Sigmoid colon (tissue), 7 donors: ENCODE measurements at regions of chr6 and their contacts with region 1.

Region 1: GRCh38 chr6:34154668-34155447 is 9.0 kb upstream of the GRM4 start:
- DNase-seq: peak; percentile 69
- H3K4me3 ChIP-seq: peak overlapping the region in 1 of 4 donors; percentile 12
- H3K27ac ChIP-seq: no peak overlapping the region
- H3K4me1 ChIP-seq: peaks cover 0 to 11% (median 7%) of the 10 kb centered on the region in 4 donors
- H3K27me3 ChIP-seq: peaks cover 14 to 59% (median 53%) of the 10 kb centered on the region in 3 donors
- CTCF ChIP-seq: peak; percentile 80 to 96 (median 89)
- EP300 ChIP-seq: no peak
- POLR2A ChIP-seq: no peak

Region 2: DNA sequence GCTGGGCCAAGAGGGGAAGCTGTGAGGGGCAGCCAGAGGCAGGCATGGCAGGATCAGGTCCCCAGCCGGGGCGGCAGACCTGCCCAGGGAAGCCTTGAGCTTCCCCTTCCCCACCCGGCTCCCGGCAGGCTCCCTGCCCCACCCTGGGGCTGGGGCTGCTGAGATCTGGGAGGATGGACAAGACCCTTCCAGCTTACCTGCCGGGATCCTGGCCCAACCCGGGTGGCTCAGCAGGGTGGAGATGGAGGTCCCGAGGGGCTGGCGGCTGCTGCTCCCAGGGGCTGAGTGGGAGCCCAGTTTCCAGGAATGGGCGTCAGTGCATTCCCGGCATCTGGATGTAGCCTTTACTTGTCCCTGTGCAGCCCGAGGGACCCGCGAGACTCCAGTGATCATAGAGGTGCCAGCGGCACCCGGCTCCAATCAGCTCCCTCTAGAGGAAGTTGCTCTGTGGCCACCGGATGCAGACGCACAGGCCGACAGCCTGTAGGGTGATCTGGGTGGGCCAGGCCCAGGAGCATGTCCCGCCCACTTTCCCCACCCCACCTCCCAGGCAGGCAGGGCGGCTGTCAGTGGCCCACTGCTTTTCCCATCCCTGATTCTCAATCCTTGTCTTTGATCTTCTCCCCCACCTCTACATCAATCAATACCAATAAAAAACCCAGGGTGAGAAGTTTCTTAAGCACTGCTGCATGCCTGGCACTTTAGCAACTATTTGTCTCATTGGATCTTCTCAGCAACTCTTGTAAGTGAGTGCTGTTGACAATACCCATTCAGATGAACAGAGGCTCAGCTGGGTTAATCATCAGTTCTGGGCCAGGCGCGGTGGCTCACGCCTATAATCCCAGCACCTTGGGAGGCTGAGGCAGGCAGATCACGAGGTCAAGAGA is 574.8 kb before region 1 on chr6 and contains the start of gene BAK1:
- intact Hi-C with region 1: loop called (anchors 10 kb)
- DNase-seq: peak; percentile 97
- H3K4me3 ChIP-seq: peak within 1 kb of the TSS; percentile 82 to 92 (median 88)
- H3K27ac ChIP-seq: peak within 1 kb of the TSS; percentile 85 to 87 (median 86)
- H3K4me1 ChIP-seq: peaks cover 0 to 24% (median 21%) of the 10 kb centered on the region in 4 donors
- H3K27me3 ChIP-seq: no peaks in the 10 kb centered on the region
- CTCF ChIP-seq: peak in 3 of 4 experiments; percentile 49 to 52 (median 50)
- EP300 ChIP-seq: no peak
- POLR2A ChIP-seq: peak; percentile 56 to 90
- total RNA-seq, gene BAK1: 8.9 to 11.1 (median 10.4) TPM

Region 3: DNA sequence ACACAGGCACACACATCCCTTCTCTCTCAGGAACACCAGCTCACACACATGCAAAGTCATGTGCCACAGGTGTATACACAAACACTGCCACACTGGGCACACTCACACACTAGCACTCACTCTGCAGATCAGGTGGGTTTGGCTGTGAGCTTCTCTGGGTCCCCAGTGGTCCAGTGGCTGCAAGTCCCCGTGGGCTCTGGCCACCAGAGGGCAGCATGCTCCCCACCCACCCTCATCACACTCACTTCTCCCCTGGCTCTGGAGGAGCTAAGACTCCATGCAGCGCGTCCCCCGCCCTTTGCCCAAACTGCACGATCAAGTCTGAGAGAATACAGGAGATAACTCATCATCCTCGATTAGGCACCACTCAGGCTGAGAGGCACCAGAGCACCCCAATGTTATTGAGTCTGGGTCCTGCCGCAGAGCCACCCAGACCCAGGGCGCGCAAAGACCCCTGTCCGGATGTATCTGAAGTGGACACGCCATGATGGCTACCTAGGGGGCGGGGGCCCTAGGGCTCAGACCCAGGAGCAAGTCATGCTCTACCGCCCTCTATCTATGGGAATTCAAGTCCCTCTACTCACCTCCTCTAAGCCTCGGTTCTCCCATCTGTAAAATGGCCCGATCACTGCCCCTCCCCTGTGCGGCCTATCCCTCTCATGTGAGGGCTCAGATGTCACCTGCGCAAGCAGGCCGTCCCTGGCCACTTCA is 99.5 kb before region 1 on chr6:
- intact Hi-C with region 1: loop called (anchors 5 kb)
- DNase-seq: peak; percentile 72
- H3K4me3 ChIP-seq: no peak overlapping the region
- H3K27ac ChIP-seq: no peak overlapping the region
- H3K4me1 ChIP-seq: peaks cover 0 to 11% (median 2%) of the 10 kb centered on the region in 4 donors
- H3K27me3 ChIP-seq: peaks cover 0 to 20% (median 0%) of the 10 kb centered on the region in 3 donors
- CTCF ChIP-seq: peak; percentile 31 to 66 (median 44)
- EP300 ChIP-seq: no peak
- POLR2A ChIP-seq: no peak